ENCODE measurements at regions of chr22 and their contacts with region 1.

Region 1: GRCh38 chr22:40436505-40437451 is 66.4 kb downstream of the SGSM3 start:
- DNase-seq: peak in 4 of 9 experiments; percentile 24 to 79 (median 66)
- ATAC-seq: peak; percentile 78
- H3K4me3 ChIP-seq: no peak overlapping the region
- H3K4me3 Mint-ChIP-seq: peak overlapping the region; percentile 37
- H3K27ac ChIP-seq: peak overlapping the region in 1 of 2 experiments; percentile 60
- H3K27ac Mint-ChIP-seq: peak overlapping the region; percentile 73
- H3K4me1 ChIP-seq: peaks cover 44% of the 10 kb centered on the region
- H3K4me1 Mint-ChIP-seq: peaks cover 61% of the 10 kb centered on the region
- H3K27me3 ChIP-seq: no peaks in the 10 kb centered on the region
- H3K27me3 Mint-ChIP-seq: no peaks in the 10 kb centered on the region
- CTCF ChIP-seq: peak; percentile 80

Region 2: DNA sequence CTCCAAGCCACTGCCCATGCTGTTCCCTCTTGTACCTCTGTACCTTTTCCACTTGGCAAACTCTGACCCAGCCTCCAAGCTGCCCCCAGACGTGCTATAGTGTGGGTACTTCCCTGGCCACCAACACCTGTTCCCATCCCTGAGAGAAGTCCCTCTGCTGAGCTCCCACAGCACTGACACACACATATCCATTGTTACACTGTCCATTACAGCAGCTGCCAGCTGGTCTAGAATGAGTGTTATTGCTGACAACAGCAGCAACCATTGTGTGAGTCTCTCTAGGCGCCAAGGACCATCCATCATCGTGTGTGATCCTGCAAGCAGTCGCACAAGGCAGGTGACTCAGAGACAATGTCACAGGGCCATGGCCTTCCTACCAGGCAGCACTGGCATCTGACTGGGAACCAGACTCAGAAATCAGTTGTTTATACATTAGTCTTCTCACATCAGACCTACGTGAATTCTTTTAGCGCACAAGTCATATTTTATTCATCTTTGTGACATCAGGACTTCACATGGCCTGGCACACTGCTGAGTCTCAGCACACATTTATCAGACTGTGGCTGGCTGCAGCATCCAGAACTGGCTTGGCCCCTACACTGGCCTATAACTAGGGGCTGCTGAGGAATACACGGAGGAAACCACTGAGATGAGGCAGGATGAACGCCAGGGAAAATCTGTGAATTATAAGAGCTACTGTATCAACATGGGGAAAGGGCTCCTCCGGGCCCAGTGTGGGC is 10.0 kb before region 1 on chr22:
- CTCF ChIA-PET with region 1: interaction called, 47 read pairs
- POLR2A ChIA-PET with region 1: no interaction called
- intact Hi-C with region 1: no loop called
- DNase-seq: no peak
- ATAC-seq: no peak
- H3K4me3 ChIP-seq: no peak overlapping the region
- H3K4me3 Mint-ChIP-seq: no peak overlapping the region
- H3K27ac ChIP-seq: no peak overlapping the region
- H3K27ac Mint-ChIP-seq: peak overlapping the region; percentile 73
- H3K4me1 ChIP-seq: no peaks in the 10 kb centered on the region
- H3K4me1 Mint-ChIP-seq: peaks cover 27% of the 10 kb centered on the region
- H3K27me3 ChIP-seq: no peaks in the 10 kb centered on the region
- H3K27me3 Mint-ChIP-seq: no peaks in the 10 kb centered on the region
- CTCF ChIP-seq: no peak

Region 3: DNA sequence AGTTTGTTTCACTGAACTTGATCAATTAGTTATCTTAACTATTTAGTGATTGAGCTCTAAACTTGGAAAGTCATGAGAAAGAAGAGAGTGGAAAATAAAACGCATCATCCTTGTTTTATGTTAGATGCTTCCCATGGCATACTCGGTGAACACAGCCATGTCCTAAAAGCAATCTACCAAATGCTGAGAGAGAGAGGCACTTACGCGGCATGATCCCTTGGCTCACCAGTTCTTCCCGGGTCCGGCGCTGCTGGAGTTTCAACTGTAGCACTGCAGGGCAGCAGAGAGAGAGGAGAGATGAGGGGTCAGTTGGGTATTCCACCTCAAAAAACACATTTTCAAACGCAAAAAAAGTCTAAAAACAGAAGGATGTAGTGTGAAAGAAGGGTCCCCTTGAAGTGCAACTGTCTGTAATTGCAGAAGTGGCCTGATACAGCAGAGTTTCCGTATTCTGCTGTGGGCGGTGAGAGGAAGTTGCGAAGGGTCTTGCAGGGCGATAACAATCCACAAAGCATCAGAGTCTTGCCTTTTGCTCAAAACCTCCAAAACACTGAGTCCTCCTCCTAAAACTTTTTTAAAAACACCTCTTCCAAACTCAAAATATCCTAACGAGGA is 26.3 kb after region 1 on chr22:
- CTCF ChIA-PET with region 1: interaction called, 46 read pairs
- POLR2A ChIA-PET with region 1: interaction called, 8 read pairs
- intact Hi-C with region 1: loop called in 1 of 2 experiments (anchors 1 kb)
- DNase-seq: peak in 8 of 9 experiments; percentile 22 to 74 (median 47)
- ATAC-seq: peak; percentile 81
- H3K4me3 ChIP-seq: peak overlapping the region; percentile 72 to 73
- H3K4me3 Mint-ChIP-seq: peak overlapping the region; percentile 98
- H3K27ac ChIP-seq: peak overlapping the region; percentile 70 to 71
- H3K27ac Mint-ChIP-seq: peak overlapping the region; percentile 98
- H3K4me1 ChIP-seq: peaks cover 51% of the 10 kb centered on the region
- H3K4me1 Mint-ChIP-seq: peaks cover 63% of the 10 kb centered on the region
- H3K27me3 ChIP-seq: no peaks in the 10 kb centered on the region
- H3K27me3 Mint-ChIP-seq: no peaks in the 10 kb centered on the region
- CTCF ChIP-seq: no peak

Region 4: DNA sequence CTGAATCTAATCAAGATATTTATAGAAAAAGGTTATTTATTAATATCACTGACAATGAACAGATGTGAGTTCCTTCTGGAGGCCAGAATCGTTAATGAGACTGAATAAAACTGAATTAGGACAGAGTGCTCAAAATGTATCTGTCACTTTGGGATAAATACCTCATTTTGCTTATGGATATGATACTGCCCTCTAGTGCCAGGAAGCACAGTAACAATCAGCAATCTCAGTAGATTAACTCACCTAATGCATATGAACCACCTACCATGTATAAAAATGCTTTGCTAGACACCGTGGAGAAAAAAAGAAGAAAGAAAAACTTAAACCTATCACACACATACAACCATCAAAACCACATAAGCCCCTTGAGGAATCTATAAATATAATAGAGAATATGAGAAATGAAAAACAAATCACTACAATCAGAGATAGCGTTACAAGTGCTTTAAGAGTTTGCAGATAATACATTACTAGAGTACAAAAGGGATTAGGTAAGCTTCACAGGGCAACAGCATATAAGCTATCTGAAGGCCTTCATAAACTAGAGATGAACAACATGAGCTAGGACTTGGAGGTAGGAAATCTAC is 51.0 kb after region 1 on chr22:
- CTCF ChIA-PET with region 1: interaction called, 232 read pairs
- POLR2A ChIA-PET with region 1: interaction called, 5 read pairs
- intact Hi-C with region 1: loop called (anchors 1 kb)
- DNase-seq: peak in 2 of 9 experiments; percentile 44 to 65
- ATAC-seq: peak; percentile 53
- H3K4me3 ChIP-seq: no peak overlapping the region
- H3K4me3 Mint-ChIP-seq: no peak overlapping the region
- H3K27ac ChIP-seq: no peak overlapping the region
- H3K27ac Mint-ChIP-seq: no peak overlapping the region
- H3K4me1 ChIP-seq: peaks cover 31% of the 10 kb centered on the region
- H3K4me1 Mint-ChIP-seq: peaks cover 43% of the 10 kb centered on the region
- H3K27me3 ChIP-seq: no peaks in the 10 kb centered on the region
- H3K27me3 Mint-ChIP-seq: no peaks in the 10 kb centered on the region
- CTCF ChIP-seq: peak; percentile 95

Region 5: GRCh38 chr22:40525249-40525884 is 88.6 kb after region 1 on chr22:
- CTCF ChIA-PET with region 1: interaction called, 25 read pairs
- POLR2A ChIA-PET with region 1: no interaction called
- intact Hi-C with region 1: no loop called
- DNase-seq: peak; percentile 50 to 83 (median 76)
- ATAC-seq: peak; percentile 82
- H3K4me3 ChIP-seq: no peak overlapping the region
- H3K4me3 Mint-ChIP-seq: no peak overlapping the region
- H3K27ac ChIP-seq: no peak overlapping the region
- H3K27ac Mint-ChIP-seq: no peak overlapping the region
- H3K4me1 ChIP-seq: peaks cover 5% of the 10 kb centered on the region
- H3K4me1 Mint-ChIP-seq: peaks cover 42% of the 10 kb centered on the region
- H3K27me3 ChIP-seq: no peaks in the 10 kb centered on the region
- H3K27me3 Mint-ChIP-seq: no peaks in the 10 kb centered on the region
- CTCF ChIP-seq: peak; percentile 84

Region 6: GRCh38 chr22:40645579-40646197 is 208.9 kb after region 1 on chr22:
- CTCF ChIA-PET with region 1: interaction called, 81 read pairs
- POLR2A ChIA-PET with region 1: interaction called, 6 read pairs
- intact Hi-C with region 1: loop called (anchors 1 kb)
- DNase-seq: no peak
- ATAC-seq: no peak
- H3K4me3 ChIP-seq: peak overlapping the region in 1 of 2 experiments; percentile 24
- H3K4me3 Mint-ChIP-seq: no peak overlapping the region
- H3K27ac ChIP-seq: no peak overlapping the region
- H3K27ac Mint-ChIP-seq: no peak overlapping the region
- H3K4me1 ChIP-seq: no peaks in the 10 kb centered on the region
- H3K4me1 Mint-ChIP-seq: peaks cover 7% of the 10 kb centered on the region
- H3K27me3 ChIP-seq: no peaks in the 10 kb centered on the region
- H3K27me3 Mint-ChIP-seq: no peaks in the 10 kb centered on the region
- CTCF ChIP-seq: no peak

Region 7: DNA sequence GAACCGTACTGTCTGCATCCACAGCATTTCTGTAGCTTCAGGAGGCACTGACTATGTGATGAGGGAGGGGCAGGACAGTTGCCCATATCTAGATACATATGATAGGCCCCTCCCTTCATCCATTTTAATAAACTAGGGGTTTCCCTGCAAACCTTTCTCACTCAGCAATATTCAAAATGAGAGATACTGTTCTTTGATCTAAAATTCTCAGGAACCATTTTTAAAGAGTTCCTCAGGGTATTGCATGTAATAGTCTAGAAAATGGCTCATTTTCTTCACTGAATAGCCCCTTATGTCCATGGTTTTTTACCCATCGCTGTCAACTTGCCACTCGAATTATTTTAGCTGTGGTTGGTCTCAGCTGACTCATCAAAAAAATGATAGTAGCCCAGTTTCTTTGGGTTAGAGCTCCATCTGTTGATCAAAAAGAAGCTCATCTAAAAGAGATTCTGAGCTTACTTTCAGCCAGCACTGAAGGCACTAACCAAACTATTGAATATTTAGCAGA is 462.1 kb after region 1 on chr22:
- CTCF ChIA-PET with region 1: interaction called, 6 read pairs
- POLR2A ChIA-PET with region 1: no interaction called
- intact Hi-C with region 1: loop called (anchors 2 kb)
- DNase-seq: peak in 2 of 9 experiments; percentile 54 to 67
- ATAC-seq: peak; percentile 38
- H3K4me3 ChIP-seq: no peak overlapping the region
- H3K4me3 Mint-ChIP-seq: no peak overlapping the region
- H3K27ac ChIP-seq: no peak overlapping the region
- H3K27ac Mint-ChIP-seq: no peak overlapping the region
- H3K4me1 ChIP-seq: no peaks in the 10 kb centered on the region
- H3K4me1 Mint-ChIP-seq: peaks cover 5% of the 10 kb centered on the region
- H3K27me3 ChIP-seq: no peaks in the 10 kb centered on the region
- H3K27me3 Mint-ChIP-seq: no peaks in the 10 kb centered on the region
- CTCF ChIP-seq: peak; percentile 40

Measured in CD8-positive, alpha-beta T cell (primary cell).